Aorta (tissue), 5 donors: ENCODE measurements at regions of chr13 and their contacts with region 1.

Region 1: DNA sequence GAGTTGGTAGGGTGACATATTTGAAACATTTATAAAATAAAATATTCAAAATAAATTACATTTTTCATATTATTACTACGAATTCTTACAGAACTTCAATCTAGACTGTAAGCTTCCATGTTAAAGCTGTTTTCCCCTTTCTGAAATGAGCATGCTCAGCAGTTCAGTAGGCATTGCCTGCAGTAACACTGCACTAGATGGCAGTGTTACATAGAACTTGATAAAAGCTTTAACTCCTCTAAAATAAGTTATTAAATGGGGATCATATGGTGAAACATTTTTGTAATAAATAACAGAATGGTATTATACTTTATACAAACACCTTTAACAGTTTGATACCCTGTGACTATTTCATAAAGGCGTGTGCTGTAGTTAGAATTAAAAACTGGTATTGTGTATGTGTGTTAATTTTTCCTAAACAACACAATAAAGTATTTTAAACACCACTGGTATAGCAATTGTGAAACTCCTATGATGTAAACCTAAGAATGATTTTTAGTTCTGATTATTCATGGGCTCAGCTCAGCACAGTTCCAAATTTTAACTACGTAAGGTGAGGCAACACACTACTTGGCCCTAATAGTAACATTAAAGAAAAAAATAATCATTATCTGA is 11.6 kb upstream of the GPR18 start:
- DNase-seq: no peak
- ATAC-seq: peak; percentile 72
- H3K4me3 ChIP-seq: no peak overlapping the region
- H3K27ac ChIP-seq: no peak overlapping the region
- H3K4me1 ChIP-seq: no peaks in the 10 kb centered on the region
- H3K27me3 ChIP-seq: no peaks in the 10 kb centered on the region

Region 2: DNA sequence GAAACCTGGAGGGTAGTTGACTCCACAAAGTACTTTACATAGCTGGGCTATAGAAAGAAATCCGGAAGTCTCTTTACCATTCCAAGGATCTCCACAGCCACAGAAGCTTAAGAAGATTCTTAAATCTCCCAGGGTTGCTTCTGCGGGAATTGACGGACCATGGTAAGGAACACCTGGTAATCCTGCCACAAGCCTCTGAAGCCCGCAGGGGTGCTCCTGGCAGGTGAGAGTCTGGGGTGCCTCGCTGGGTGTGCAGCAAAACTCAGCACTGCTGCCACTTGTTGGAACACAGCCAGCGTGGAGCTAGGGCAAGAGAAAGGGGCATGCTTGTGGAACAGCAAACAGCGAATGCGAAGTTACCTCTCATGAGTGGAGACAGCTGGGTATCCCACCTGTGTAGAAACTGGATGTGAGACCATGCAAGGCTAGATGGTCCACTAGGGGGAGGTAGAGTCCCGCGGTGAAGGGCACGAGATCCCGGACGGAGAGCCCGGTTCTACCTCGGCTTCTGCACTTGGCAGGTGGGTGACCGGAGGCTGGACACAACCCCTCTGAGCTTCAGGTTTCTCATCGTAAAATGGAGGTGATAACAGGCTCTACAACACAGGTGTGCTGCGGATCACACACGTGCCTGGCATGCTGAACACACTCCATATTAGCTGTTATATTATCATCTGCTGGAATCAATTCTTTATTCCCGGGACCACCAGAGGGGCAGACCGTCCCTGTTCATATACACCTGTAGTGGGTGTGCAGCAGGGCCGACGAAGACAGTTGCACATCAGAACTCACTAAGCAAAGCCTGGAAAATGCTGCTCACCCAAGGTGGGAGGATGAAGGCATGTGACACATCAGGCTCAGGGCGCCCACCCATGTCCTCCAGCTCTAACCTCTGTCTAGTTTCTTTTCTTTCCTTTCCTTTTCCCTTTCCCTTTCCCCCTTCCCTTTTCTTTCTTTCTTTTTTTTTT is 93.1 kb before region 1 on chr13:
- intact Hi-C with region 1: loop called (anchors 2 kb)
- DNase-seq: peak; percentile 67 to 87
- ATAC-seq: peak; percentile 85
- H3K4me3 ChIP-seq: no peak overlapping the region
- H3K27ac ChIP-seq: no peak overlapping the region
- H3K4me1 ChIP-seq: no peaks in the 10 kb centered on the region
- H3K27me3 ChIP-seq: no peaks in the 10 kb centered on the region

Region 3: DNA sequence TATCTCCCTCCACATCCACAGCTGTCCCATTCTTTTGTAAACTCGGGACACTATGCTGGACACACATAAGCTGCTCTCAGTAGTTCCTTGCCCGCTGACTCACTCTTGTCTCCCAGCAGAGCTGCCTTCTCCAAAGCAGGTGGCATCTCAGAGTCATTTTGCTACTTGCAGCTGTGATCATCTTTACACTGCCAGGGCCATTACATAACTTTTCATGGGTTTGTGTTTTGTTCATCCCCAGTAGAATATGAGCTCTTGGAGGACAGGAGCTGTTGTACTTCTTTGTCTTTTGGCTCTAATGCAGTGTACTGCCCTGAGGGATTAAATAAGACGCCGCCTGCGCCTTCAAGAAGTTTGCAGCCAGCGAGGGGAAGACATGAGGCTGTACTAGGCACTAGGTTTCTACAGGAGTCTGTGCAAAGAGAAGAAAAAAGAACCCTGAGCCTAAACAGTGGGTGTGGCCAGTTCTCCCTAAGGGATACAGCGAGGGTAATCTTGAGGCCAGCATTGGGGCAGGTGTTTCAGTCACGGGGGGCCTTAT is 78.2 kb after region 1 on chr13:
- intact Hi-C with region 1: no loop called
- DNase-seq: no peak
- ATAC-seq: no peak
- H3K4me3 ChIP-seq: no peak overlapping the region
- H3K27ac ChIP-seq: no peak overlapping the region
- H3K4me1 ChIP-seq: no peaks in the 10 kb centered on the region
- H3K27me3 ChIP-seq: no peaks in the 10 kb centered on the region

Region 4: GRCh38 chr13:99366075-99366987 is 96.6 kb after region 1 on chr13:
- intact Hi-C with region 1: loop called in 1 of 2 experiments (anchors 10 kb)
- DNase-seq: no peak
- ATAC-seq: no peak
- H3K4me3 ChIP-seq: no peak overlapping the region
- H3K27ac ChIP-seq: no peak overlapping the region
- H3K4me1 ChIP-seq: no peaks in the 10 kb centered on the region
- H3K27me3 ChIP-seq: no peaks in the 10 kb centered on the region

Region 5: DNA sequence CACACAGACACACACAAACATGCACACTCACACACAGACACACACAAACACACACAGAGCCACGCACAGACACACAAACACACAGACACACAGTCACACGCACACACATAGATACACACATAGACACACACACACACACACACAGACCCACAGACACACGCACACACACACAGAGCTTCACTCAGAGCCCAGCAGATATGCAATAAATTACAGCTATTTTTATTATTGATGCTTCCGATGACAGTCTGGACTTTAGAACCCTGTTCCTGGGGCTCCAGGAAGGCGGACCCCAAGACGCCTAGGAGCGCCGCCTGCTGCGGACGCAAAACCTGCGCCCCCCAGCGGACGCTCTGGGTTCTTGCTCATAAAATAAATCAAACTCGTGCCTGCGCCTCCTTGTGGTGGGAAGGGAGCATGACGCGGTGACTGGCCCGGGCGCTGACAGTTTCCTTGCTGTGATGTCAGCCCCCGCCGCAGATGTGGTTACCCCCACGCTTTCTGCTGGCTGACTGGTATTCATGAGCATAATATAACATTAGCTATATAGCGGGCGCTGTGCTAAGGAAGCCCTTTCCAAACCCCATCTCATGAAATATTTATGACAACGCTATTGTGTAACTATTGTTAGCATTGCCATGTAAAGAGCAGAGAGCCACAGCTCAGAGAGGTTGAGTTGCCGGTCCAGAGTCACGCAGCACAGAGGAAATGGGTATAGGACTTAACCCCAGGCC is 167.1 kb after region 1 on chr13:
- intact Hi-C with region 1: loop called (anchors 2 kb)
- DNase-seq: peak; percentile 91 to 95
- ATAC-seq: peak; percentile 85
- H3K4me3 ChIP-seq: no peak overlapping the region
- H3K27ac ChIP-seq: no peak overlapping the region
- H3K4me1 ChIP-seq: no peaks in the 10 kb centered on the region
- H3K27me3 ChIP-seq: no peaks in the 10 kb centered on the region